H1 (cell line): ENCODE measurements at regions of chr17 and their contacts with region 1.

Region 1: DNA sequence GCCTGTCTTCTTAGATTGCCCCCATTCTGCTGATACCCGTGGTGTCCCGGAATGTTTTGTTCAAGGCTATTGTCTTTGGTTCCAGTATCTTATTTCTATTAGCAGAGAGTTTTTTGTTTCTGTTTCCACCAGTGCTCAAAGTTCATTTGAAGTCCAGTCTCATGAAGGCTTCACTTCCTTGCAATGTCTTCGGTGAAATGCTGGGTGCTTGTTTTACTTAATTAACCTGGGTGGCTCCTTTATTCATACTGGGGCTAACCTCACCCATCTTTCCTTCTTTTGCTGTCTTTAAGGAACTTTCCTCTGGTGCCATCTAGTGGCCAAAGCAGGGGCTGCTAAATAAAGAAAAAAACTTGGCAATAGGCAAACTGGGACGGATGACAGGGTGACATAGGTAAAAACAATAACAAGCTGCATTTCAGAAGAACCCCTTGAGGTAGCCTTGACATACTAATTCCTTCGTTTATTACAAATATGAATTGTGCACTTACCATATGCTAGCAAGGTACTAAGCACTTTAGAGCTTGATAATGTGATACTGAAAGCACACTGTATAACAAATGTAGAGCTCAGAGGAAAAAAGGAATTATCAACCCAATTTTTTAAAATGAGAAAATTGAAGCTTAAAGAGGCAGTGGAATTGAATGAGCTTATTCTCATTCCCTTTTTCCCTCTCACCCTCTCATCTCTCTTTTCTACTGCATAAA is 2.8 kb upstream of the SMIM36 start:
- DNase-seq: peak; percentile 36 to 89
- H3K4me3 ChIP-seq: no peak overlapping the region
- H3K27ac ChIP-seq: no peak overlapping the region
- H3K4me1 ChIP-seq: peaks cover 0 to 4% (median 2%) of the 10 kb centered on the region in 4 experiments; a peak in 2 of 7 replicates
- H3K27me3 ChIP-seq: no peaks in the 10 kb centered on the region
- CTCF ChIP-seq: peak in 2 of 3 experiments; percentile 72 to 79; a peak in 3 of 4 replicates
- EP300 ChIP-seq: no peak
- POLR2A ChIP-seq: no peak
- RAD21 ChIP-seq: peak; percentile 86 to 93

Region 2: GRCh38 chr17:55407641-55408566 is 106.1 kb before region 1 on chr17:
- CTCF ChIA-PET with region 1: interaction called, 11 read pairs
- POLR2A ChIA-PET with region 1: no interaction called
- DNase-seq: no peak
- H3K4me3 ChIP-seq: no peak overlapping the region
- H3K27ac ChIP-seq: no peak overlapping the region
- H3K4me1 ChIP-seq: no peaks in the 10 kb centered on the region
- H3K27me3 ChIP-seq: no peaks in the 10 kb centered on the region
- CTCF ChIP-seq: no peak
- EP300 ChIP-seq: no peak
- POLR2A ChIP-seq: no peak
- RAD21 ChIP-seq: no peak

Region 3: GRCh38 chr17:55478986-55479385 is 35.1 kb before region 1 on chr17:
- CTCF ChIA-PET with region 1: no interaction called
- POLR2A ChIA-PET with region 1: no interaction called
- DNase-seq: no peak
- H3K4me3 ChIP-seq: no peak overlapping the region
- H3K27ac ChIP-seq: no peak overlapping the region
- H3K4me1 ChIP-seq: peaks cover 0 to 2% (median 0%) of the 10 kb centered on the region in 4 experiments; a peak in 1 of 7 replicates
- H3K27me3 ChIP-seq: no peaks in the 10 kb centered on the region
- CTCF ChIP-seq: no peak
- EP300 ChIP-seq: no peak
- POLR2A ChIP-seq: no peak
- RAD21 ChIP-seq: no peak